ENCODE measurements at regions of chr13 and their contacts with region 1.

Region 1: GRCh38 chr13:66657165-66657881 is 572.8 kb downstream of the PCDH9 start:
- DNase-seq: peak; percentile 97
- H3K4me3 ChIP-seq: no peak overlapping the region
- H3K27ac ChIP-seq: peak overlapping the region; percentile 79
- H3K4me1 ChIP-seq: peaks cover 18% of the 10 kb centered on the region
- H3K27me3 ChIP-seq: no peaks in the 10 kb centered on the region
- CTCF ChIP-seq: no peak

Region 2: GRCh38 chr13:66468656-66469055 is 188.7 kb before region 1 on chr13:
- CTCF ChIA-PET with region 1: no interaction called
- dilution Hi-C with region 1: no loop called
- in situ Hi-C with region 1: no loop called
- intact Hi-C with region 1: loop called (anchors 1 kb)
- DNase-seq: no peak
- H3K4me3 ChIP-seq: no peak overlapping the region
- H3K27ac ChIP-seq: no peak overlapping the region
- H3K4me1 ChIP-seq: no peaks in the 10 kb centered on the region
- H3K27me3 ChIP-seq: no peaks in the 10 kb centered on the region
- CTCF ChIP-seq: no peak

Region 3: DNA sequence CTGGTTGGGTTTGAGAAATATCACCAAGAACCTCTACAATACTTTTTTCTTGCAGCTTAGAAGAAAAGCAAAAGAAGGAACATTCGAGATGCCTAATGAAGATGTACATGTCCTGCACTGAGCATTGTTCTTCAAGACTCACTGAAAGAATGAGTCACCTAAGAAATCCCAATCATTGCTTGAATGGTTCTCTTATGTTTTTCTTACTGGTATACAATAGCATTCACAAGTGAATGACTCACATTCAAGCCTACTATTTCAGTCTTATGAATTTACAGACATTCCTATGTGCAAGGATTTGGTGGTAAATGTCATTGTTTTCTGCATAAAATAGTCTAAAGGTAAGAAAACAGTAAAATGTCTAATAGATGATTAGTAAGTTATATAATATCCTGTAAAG is 21.8 kb before region 1 on chr13:
- CTCF ChIA-PET with region 1: no interaction called
- dilution Hi-C with region 1: no loop called
- in situ Hi-C with region 1: no loop called
- intact Hi-C with region 1: loop called (anchors 1 kb)
- DNase-seq: peak; percentile 80
- H3K4me3 ChIP-seq: no peak overlapping the region
- H3K27ac ChIP-seq: no peak overlapping the region
- H3K4me1 ChIP-seq: peaks cover 11% of the 10 kb centered on the region
- H3K27me3 ChIP-seq: no peaks in the 10 kb centered on the region
- CTCF ChIP-seq: no peak

Region 4: DNA sequence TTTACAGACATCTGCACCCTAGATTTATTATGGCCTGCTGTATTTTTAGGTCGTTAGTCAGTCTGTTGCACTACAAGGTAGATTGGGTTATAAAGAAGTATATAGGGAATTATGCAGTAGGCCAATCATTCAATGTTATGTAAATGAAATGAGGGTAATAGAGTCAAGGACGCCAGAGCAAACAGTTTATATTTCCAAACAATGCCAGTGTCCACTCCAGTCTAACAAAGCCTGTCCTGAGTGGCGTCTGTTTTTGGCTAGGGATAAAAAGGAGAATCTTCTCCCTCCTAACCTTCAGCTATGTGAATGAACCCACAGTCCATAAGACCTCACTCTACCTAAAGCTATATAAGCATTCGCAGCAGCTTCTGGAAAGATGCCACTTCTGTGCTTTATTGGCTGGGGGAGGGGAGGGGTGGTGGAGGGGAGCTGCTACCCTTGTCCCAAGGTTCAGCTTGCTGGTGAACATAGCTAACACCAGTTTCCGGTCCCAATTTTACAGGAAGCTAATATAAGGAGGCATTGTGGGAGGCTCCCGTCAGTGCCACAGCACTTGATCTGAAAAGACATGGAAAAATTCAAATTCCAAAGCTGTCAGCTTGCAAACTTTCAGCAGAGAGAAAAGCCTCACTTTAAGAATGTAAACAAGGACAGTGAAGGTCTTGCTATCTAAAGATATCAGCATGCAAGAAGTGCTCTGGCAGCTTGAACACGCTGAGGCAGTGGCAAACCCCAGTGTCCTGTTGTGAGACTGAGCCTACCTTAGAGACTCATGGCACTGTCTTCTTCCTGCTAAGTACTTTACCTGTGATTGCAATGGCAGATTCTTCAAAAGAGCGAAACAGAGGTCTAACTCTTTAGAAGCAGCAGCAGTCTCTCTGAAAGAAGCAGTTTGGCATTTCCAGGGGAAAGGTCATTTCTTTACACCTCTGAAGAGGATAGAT is 202.9 kb after region 1 on chr13:
- CTCF ChIA-PET with region 1: no interaction called
- dilution Hi-C with region 1: no loop called
- in situ Hi-C with region 1: no loop called
- intact Hi-C with region 1: no loop called
- DNase-seq: no peak
- H3K4me3 ChIP-seq: no peak overlapping the region
- H3K27ac ChIP-seq: no peak overlapping the region
- H3K4me1 ChIP-seq: no peaks in the 10 kb centered on the region
- H3K27me3 ChIP-seq: no peaks in the 10 kb centered on the region
- CTCF ChIP-seq: no peak